Activated T-helper 2 cell treated with anti-CD3 and anti-CD28 coated beads, Interferon-gamma antibody, Interleukin-2, Interleukin-4, amounts not matched to agents 10 μg/mL and 5 μg/mL and 100 μg/mL, durations not matched to agents 14 hours and 24 hours and 36 hours (primary cell): ENCODE measurements at regions of chr13 and their contacts with region 1.

Region 1: DNA sequence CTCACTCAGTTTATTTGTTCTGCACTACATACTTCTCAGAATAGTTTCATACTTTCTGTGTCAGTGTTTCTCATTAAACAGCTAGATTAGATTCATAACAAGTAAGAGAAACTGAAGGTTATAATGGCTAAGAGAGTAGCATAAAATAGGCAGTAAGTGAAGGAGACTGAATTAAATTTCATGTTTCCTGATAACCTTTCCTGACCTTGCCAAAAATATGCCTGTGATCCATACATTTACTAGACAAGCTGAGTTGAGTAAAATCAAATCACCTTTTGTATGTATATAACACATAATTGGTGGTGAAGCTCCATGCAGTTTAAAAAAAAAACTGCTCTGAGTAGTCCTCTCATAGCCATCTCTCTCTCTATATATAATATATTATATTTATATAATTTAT is 545.3 kb upstream of the PCDH20 start:
- DNase-seq: no peak
- H3K4me3 Mint-ChIP-seq: no peak overlapping the region
- H3K27ac Mint-ChIP-seq: no peak overlapping the region
- H3K4me1 Mint-ChIP-seq: no peaks in the 10 kb centered on the region
- H3K27me3 Mint-ChIP-seq: no peaks in the 10 kb centered on the region

Region 2: DNA sequence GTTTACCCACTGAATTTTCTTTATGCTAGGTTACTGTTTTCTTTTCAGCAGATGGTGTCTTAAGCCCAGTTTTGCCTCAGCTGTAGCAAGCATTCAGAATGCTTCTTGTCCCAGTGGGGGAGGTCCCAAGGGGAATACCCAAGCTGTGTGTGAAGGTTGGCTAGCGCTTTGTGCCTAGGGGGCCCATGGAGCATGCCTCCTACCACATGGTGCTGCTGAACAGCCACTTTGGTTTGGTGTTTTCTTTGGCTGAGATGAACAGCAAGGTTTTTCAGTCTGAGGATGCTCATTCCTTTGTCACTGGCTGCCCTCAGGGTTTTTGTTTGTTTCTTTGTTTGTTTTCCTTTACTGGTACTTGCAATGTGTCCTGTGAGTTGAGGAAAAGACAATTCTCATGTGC is 644.3 kb before region 1 on chr13:
- intact Hi-C with region 1: no loop called
- DNase-seq: no peak
- H3K4me3 Mint-ChIP-seq: no peak overlapping the region
- H3K27ac Mint-ChIP-seq: no peak overlapping the region
- H3K4me1 Mint-ChIP-seq: no peaks in the 10 kb centered on the region
- H3K27me3 Mint-ChIP-seq: no peaks in the 10 kb centered on the region

Region 3: DNA sequence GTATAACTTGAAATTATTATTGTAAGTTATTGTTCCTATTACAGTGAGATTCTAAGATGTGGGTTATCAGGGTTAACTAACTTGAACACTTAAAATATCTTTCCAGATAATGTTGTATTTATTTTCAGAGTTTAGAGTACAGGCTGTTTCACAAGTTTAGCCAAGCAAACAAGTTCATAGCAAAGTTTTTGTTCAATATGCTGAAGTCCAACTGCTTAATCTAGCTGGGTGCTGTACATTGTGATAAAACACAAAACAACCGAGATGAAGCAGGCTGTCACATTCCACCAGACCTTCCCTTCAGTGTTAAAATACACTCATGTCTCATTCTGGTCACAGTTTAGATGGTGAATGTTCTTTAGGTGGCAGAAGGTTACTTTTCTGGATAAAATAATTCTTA is 397.3 kb before region 1 on chr13:
- intact Hi-C with region 1: no loop called
- DNase-seq: no peak
- H3K4me3 Mint-ChIP-seq: no peak overlapping the region
- H3K27ac Mint-ChIP-seq: no peak overlapping the region
- H3K4me1 Mint-ChIP-seq: no peaks in the 10 kb centered on the region
- H3K27me3 Mint-ChIP-seq: no peaks in the 10 kb centered on the region

Region 4: DNA sequence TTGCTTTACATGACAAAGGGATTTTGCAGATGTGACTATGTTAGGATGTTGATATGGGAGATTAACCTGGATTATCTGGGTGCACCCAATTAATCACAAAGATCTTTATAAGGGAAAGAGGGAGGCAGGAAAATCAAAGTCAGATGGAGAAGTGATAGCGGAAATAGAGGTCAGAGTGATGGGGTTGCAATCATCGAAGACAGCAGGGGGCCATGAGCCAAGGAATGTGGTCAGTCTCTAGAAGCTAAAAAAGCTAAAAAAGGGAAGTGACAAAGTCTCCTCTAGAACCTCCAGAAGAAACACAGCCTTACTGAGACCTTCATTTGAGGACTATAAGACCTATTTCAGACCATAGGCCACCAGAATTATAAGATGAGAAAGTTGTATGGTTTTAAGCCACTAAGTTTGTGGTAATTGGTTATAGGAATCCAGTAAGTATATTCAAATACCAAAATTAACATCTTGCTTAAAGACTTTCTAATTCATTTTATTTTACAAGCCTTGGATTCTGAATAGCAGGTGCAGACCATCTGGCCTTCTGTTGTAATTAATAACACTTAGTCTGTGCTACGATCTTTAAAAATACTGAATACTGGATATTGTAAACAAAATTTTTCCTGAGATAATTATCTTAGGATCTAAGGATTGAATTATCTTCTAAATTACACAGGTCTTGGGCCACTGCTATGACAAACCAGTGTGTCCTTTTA is 51.9 kb before region 1 on chr13:
- intact Hi-C with region 1: no loop called
- DNase-seq: no peak
- H3K4me3 Mint-ChIP-seq: no peak overlapping the region
- H3K27ac Mint-ChIP-seq: no peak overlapping the region
- H3K4me1 Mint-ChIP-seq: no peaks in the 10 kb centered on the region
- H3K27me3 Mint-ChIP-seq: no peaks in the 10 kb centered on the region

Region 5: DNA sequence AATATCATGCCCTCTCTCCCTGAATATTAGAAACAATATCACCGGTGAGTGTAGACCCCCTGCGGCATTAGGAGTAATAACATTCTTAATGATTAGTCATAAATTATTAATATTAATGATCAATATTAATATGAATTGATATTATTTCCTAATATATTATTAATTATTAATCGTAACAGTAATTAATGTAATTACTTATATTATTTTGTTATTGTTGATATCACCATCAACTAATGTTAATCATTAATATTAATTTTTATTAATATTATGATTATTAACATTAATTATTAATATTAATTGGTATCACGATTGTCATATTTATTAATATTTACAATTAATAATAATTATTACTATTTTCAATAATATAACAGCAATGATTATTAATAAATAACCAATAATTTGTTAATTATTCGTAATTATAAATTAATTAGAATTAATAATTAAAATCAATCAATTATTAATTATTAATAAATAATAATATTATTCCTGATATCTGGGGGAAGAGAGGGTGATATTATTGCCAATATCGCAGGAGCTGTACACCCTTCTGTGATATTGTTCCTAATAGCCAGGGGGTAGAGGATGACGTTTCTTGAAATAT is 16.6 kb before region 1 on chr13:
- intact Hi-C with region 1: loop called (anchors 2 kb)
- DNase-seq: no peak
- H3K4me3 Mint-ChIP-seq: no peak overlapping the region
- H3K27ac Mint-ChIP-seq: no peak overlapping the region
- H3K4me1 Mint-ChIP-seq: no peaks in the 10 kb centered on the region
- H3K27me3 Mint-ChIP-seq: no peaks in the 10 kb centered on the region